Ascending aorta (tissue), 2 donors: ENCODE measurements at regions of chr3 and their contacts with region 1.

Region 1: DNA sequence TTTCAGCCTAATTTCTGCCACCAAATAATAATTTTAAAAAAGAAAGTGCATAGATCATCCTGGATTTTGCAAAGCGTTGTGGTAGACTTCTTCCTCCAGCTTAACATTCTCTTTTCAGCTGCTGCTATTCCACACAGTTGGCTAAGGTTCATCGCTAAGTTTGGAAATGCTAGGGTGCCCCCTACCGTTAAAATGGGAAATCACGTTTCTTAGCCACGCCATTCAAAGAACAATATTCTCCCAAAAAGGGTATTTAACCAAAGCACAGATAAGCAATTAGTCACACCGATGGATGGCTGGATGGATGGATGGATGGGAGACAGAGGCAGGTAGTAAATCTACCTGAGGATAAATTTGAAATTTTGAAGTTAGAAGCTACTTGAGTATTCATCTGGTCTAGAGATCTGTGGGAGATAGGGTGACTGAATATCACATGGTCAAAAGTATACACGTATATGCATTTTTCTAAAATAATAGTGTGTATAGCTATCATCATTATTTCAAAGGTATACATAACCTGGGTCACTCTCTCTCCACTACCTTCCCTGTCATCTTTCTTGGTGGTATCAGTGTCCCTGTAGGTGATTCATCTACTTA is 67.2 kb downstream of the EFHB start:
- DNase-seq: peak in 1 of 2 donors; percentile 73
- H3K4me3 ChIP-seq: no peak overlapping the region
- H3K27ac ChIP-seq: no peak overlapping the region
- H3K4me1 ChIP-seq: no peaks in the 10 kb centered on the region
- H3K27me3 ChIP-seq: no peaks in the 10 kb centered on the region
- CTCF ChIP-seq: peak; percentile 57 to 76 (median 61)

Region 2: DNA sequence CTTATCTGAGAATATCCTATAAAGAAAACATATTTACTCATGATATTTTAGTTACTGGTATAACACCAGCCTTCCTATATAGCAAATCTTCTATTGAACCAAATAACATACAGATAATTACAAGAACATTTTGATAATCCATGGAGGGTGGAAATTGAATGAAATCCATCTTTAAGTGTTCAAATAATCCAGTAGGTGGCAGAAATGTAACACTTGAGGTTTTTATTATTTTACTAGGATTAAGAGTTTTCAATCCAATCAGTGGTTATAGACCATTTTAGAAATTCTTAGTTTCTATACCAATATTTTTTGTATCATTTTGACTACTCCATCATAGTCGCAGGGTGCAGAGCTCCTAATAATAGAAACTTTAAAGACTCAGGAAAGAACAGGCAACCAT is 820.4 kb before region 1 on chr3:
- intact Hi-C with region 1: loop called (anchors 5 kb)
- DNase-seq: no peak
- H3K4me3 ChIP-seq: no peak overlapping the region
- H3K27ac ChIP-seq: no peak overlapping the region
- H3K4me1 ChIP-seq: no peaks in the 10 kb centered on the region
- H3K27me3 ChIP-seq: no peaks in the 10 kb centered on the region
- CTCF ChIP-seq: peak in 1 of 3 experiments; percentile 32

Region 3: GRCh38 chr3:19065027-19065426 is 801.8 kb before region 1 on chr3:
- intact Hi-C with region 1: loop called (anchors 2 kb)
- DNase-seq: no peak
- H3K4me3 ChIP-seq: no peak overlapping the region
- H3K27ac ChIP-seq: no peak overlapping the region
- H3K4me1 ChIP-seq: peaks cover 0 to 2% of the 10 kb centered on the region in 2 donors
- H3K27me3 ChIP-seq: no peaks in the 10 kb centered on the region
- CTCF ChIP-seq: peak in 2 of 3 experiments; percentile 29 to 41

Region 4: DNA sequence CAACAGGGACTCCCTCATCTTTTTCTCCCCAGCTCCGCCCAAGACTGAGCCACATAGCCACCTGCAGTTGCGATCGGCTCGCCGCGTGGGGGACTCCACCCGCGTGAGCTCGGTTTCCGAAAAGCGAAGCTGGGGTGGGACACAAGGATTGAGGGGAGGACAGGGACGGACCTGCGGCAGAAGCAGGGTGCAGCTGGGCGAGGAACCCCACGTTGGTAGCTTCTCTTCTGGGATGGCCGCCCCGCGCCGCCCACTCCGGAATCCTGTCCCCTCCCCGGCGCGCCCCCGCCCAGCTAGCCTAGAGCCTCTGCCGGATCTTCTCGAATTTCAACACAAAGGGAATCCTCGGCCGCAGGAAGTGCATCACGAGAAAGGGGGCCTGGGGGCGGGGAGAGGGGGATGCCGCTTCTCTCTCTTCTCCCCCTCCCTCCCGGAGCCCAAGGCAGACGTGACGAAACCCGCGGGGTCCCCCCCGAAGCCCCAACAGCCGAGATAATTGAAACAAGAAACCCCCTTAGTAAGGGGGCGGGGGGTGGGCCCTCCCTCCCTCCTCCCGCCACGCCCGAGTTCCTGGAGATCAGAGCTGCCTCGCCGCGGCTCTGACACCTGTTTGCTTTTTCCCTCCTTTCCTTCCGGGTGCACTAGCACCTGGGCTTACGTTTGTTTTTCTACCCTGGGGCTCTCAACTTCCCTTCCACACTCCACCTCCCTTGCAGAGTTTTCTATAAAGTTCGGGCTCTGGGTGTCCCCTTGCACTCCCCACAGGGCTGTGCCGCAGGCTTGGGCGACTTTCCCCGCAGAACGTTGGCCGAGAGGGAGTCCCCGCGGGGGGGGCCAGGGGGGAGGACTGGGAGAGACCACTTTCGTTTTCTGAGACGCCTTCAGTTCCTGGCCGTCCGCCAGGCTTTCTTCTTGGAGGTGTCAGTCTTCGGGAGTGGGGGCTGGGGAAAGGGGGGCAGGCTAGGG is 719.9 kb before region 1 on chr3:
- intact Hi-C with region 1: loop called (anchors 5 kb)
- DNase-seq: peak in 1 of 2 donors; percentile 70
- H3K4me3 ChIP-seq: peak overlapping the region; percentile 78 to 89
- H3K27ac ChIP-seq: no peak overlapping the region
- H3K4me1 ChIP-seq: peaks cover 5 to 8% of the 10 kb centered on the region in 2 donors
- H3K27me3 ChIP-seq: no peaks in the 10 kb centered on the region
- CTCF ChIP-seq: peak; percentile 8 to 48 (median 27)

Region 5: GRCh38 chr3:19348929-19349564 is 517.8 kb before region 1 on chr3:
- intact Hi-C with region 1: loop called (anchors 1 kb)
- DNase-seq: no peak
- H3K4me3 ChIP-seq: no peak overlapping the region
- H3K27ac ChIP-seq: no peak overlapping the region
- H3K4me1 ChIP-seq: no peaks in the 10 kb centered on the region
- H3K27me3 ChIP-seq: no peaks in the 10 kb centered on the region
- CTCF ChIP-seq: peak; percentile 43 to 82 (median 75)

Region 6: GRCh38 chr3:19798324-19798723 is 68.5 kb before region 1 on chr3:
- intact Hi-C with region 1: no loop called
- DNase-seq: no peak
- H3K4me3 ChIP-seq: no peak overlapping the region
- H3K27ac ChIP-seq: no peak overlapping the region
- H3K4me1 ChIP-seq: no peaks in the 10 kb centered on the region
- H3K27me3 ChIP-seq: no peaks in the 10 kb centered on the region
- CTCF ChIP-seq: no peak